ENCODE measurements at regions of chr3 and their contacts with region 1.

Region 1: GRCh38 chr3:42190701-42191462 is 75.1 kb downstream of the CCK start:
- DNase-seq: peak; percentile 67
- H3K4me3 ChIP-seq: peak overlapping the region in 1 of 2 experiments; percentile 26; a peak in 1 of 4 replicates
- H3K27ac ChIP-seq: no peak overlapping the region; a peak in 1 of 4 replicates
- H3K4me1 ChIP-seq: peaks cover 0 to 2% of the 10 kb centered on the region in 2 experiments; a peak in 1 of 4 replicates
- H3K27me3 ChIP-seq: no peaks in the 10 kb centered on the region
- CTCF ChIP-seq: peak; percentile 91
- EP300 ChIP-seq: no peak
- RAD21 ChIP-seq: peak; percentile 78

Region 2: GRCh38 chr3:42110631-42111030 is 80.3 kb before region 1 on chr3:
- CTCF ChIA-PET with region 1: interaction called, 261 read pairs
- POLR2A ChIA-PET with region 1: no interaction called
- DNase-seq: no peak
- H3K4me3 ChIP-seq: no peak overlapping the region
- H3K27ac ChIP-seq: no peak overlapping the region
- H3K4me1 ChIP-seq: no peaks in the 10 kb centered on the region
- H3K27me3 ChIP-seq: no peaks in the 10 kb centered on the region
- CTCF ChIP-seq: no peak
- EP300 ChIP-seq: no peak
- RAD21 ChIP-seq: no peak

Region 3: GRCh38 chr3:42123824-42124658 is 66.8 kb before region 1 on chr3:
- CTCF ChIA-PET with region 1: interaction called, 261 read pairs
- POLR2A ChIA-PET with region 1: no interaction called
- DNase-seq: no peak
- H3K4me3 ChIP-seq: no peak overlapping the region
- H3K27ac ChIP-seq: no peak overlapping the region
- H3K4me1 ChIP-seq: peaks cover 0 to 2% of the 10 kb centered on the region in 2 experiments; a peak in 2 of 4 replicates
- H3K27me3 ChIP-seq: no peaks in the 10 kb centered on the region
- CTCF ChIP-seq: no peak
- EP300 ChIP-seq: no peak
- RAD21 ChIP-seq: no peak

Region 4: GRCh38 chr3:42159706-42160472 is 31.0 kb before region 1 on chr3:
- CTCF ChIA-PET with region 1: interaction called, 11 read pairs
- POLR2A ChIA-PET with region 1: no interaction called
- DNase-seq: peak; percentile 86
- H3K4me3 ChIP-seq: peak overlapping the region in 1 of 2 experiments; percentile 38; a peak in 2 of 4 replicates
- H3K27ac ChIP-seq: peak overlapping the region in 1 of 2 experiments; percentile 83; a peak in 2 of 4 replicates
- H3K4me1 ChIP-seq: peaks cover 3 to 35% of the 10 kb centered on the region in 2 experiments; a peak in 3 of 4 replicates
- H3K27me3 ChIP-seq: no peaks in the 10 kb centered on the region
- CTCF ChIP-seq: no peak
- EP300 ChIP-seq: no peak
- RAD21 ChIP-seq: no peak

Region 5: DNA sequence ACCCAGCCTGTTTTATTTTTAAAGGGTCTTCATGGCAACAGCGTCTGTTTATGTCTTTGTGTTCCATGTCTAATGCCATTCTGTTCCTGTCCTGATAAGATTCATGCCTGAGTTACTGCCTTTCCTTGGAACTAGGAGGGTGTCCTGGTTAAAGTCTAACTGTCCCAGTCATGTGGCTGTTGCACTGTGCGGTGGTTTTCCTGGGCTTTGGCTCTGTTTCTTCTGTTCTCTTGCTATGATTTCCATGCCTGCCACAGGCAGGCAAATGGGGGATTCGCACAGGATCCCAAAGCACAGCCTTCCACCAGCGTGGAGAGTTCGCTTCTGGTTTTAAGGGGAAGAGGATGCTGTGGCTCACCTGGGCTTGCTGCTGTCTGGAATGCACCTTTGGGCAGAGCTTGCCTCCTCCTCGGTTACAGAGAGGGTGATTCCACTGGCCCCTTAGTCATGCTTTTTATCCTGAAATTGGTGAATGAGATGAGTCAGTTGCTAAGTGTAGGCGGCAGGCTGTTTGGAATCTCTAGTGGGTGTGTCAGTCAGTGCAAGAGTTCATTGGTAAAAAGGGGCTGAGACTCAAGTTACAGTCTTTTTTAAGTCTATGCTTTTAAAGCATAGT is 11.7 kb before region 1 on chr3:
- CTCF ChIA-PET with region 1: interaction called, 70 read pairs
- POLR2A ChIA-PET with region 1: interaction called, 3 read pairs
- DNase-seq: no peak
- H3K4me3 ChIP-seq: no peak overlapping the region; a peak in 1 of 4 replicates
- H3K27ac ChIP-seq: peak overlapping the region in 1 of 2 experiments; percentile 57; a peak in 2 of 4 replicates
- H3K4me1 ChIP-seq: peaks cover 5 to 9% of the 10 kb centered on the region in 2 experiments; a peak in 3 of 4 replicates
- H3K27me3 ChIP-seq: no peaks in the 10 kb centered on the region
- CTCF ChIP-seq: no peak
- EP300 ChIP-seq: no peak
- RAD21 ChIP-seq: no peak

Region 6: DNA sequence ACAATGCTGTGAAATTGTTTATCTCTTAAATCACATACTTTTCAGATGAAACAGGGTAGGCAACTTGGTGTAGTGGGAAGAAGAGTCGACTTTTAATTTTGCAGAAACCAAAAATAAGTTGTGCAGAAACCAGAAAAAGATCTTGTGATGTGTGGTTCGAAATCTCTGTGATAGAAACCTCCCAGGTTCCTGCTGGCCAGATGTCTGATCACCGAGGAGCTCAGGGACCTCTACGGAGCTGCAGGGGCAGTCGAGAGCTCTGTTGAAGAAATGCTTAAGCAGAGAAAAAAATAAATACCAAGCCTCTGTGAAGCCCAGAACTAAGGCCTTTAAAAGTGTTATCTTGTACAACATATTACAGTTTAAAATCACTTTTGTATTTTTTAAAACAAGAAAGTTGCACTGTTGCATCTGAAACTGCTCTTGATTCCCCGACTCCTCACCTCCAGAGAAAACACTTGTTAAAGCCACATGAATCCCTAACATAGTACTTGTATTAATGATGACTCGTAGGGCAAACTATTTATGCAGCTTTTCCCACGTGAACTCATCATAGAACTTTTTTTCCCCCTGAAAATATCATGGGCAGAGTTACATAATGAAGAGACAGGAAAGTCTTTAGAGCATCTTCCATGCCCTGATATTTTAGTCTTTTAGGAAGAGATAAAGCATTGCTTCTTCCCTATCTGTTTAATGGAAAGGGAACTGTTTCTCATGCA is 23.8 kb after region 1 on chr3:
- CTCF ChIA-PET with region 1: interaction called, 14 read pairs
- POLR2A ChIA-PET with region 1: no interaction called
- DNase-seq: no peak
- H3K4me3 ChIP-seq: no peak overlapping the region
- H3K27ac ChIP-seq: peak overlapping the region in 1 of 2 experiments; percentile 75; a peak in 2 of 4 replicates
- H3K4me1 ChIP-seq: no peaks in the 10 kb centered on the region; a peak in 1 of 4 replicates
- H3K27me3 ChIP-seq: no peaks in the 10 kb centered on the region
- CTCF ChIP-seq: no peak
- EP300 ChIP-seq: no peak
- RAD21 ChIP-seq: no peak

Measured in SK-N-SH (cell line).